ENCODE measurements at regions of chr1 and their contacts with region 1.

Region 1: DNA sequence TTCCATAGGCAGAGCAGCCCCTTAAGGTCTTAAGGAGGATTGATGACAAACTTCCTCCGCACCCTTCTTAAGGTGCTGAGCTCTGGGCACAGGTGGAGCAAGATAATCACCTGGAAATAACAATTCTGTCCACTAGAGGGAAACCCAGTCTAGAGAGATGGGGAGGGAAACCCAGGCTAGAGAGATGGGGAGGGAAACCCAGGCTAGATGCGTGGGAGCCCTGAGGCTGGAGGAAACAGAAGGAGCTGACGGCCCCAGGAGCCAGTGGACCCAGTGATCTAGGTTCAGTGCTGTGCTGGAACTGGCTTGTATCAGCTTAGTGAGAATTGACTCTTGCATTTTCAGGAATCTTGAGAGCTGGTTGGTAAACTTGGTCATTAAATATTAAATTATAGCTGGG is 17.8 kb upstream of the MYCL start:
- DNase-seq: peak; percentile 54 to 61
- H3K4me3 ChIP-seq: no peak overlapping the region
- H3K27ac ChIP-seq: no peak overlapping the region
- H3K4me1 ChIP-seq: no peaks in the 10 kb centered on the region
- H3K27me3 ChIP-seq: no peaks in the 10 kb centered on the region
- CTCF ChIP-seq: peak; percentile 90

Region 2: GRCh38 chr1:39933956-39934941 is 14.7 kb after region 1 on chr1:
- CTCF ChIA-PET with region 1: interaction called, 10 read pairs
- POLR2A ChIA-PET with region 1: no interaction called
- intact Hi-C with region 1: no loop called
- DNase-seq: peak; percentile 17 to 78
- H3K4me3 ChIP-seq: no peak overlapping the region
- H3K27ac ChIP-seq: peak overlapping the region; percentile 44
- H3K4me1 ChIP-seq: peaks cover 21% of the 10 kb centered on the region
- H3K27me3 ChIP-seq: no peaks in the 10 kb centered on the region
- CTCF ChIP-seq: no peak

Region 3: GRCh38 chr1:39996396-39997004 is 77.0 kb after region 1 on chr1:
- CTCF ChIA-PET with region 1: no interaction called
- POLR2A ChIA-PET with region 1: no interaction called
- intact Hi-C with region 1: no loop called
- DNase-seq: no peak
- H3K4me3 ChIP-seq: no peak overlapping the region
- H3K27ac ChIP-seq: no peak overlapping the region
- H3K4me1 ChIP-seq: no peaks in the 10 kb centered on the region
- H3K27me3 ChIP-seq: no peaks in the 10 kb centered on the region
- CTCF ChIP-seq: no peak

Region 4: DNA sequence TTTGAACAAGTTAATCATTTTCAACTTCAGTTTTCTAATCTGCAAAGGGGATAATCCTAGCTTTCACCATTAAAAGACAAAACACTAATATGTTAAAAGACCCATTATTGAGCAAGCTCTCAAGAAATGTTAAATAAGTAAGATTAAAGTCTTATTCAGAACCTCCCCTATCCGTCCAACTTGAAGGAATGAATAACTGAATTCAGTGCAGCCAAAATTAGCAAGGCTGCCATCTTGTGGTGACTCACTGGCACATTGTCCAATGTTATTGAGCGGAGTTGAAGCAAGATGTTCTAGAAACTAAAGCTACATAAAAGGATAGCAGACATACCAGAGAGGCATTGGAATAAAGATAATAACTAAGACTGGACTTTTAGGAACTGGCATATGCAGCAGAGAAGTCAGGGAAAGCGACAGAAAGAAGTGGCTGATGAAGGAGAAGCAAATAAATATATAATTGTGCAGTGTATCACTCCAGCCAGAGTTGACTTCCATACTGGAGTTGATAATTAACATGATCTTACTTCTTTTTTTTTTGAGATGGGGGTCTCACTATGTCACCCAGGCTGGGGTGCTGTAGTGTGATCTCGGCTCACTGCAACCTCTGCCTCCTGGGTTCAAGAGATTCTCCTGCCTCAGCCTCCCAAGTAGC is 112.8 kb after region 1 on chr1:
- CTCF ChIA-PET with region 1: interaction called, 33 read pairs
- POLR2A ChIA-PET with region 1: interaction called, 3 read pairs
- intact Hi-C with region 1: loop called (anchors 1 kb)
- DNase-seq: peak in 1 of 2 experiments; percentile 55
- H3K4me3 ChIP-seq: no peak overlapping the region
- H3K27ac ChIP-seq: no peak overlapping the region
- H3K4me1 ChIP-seq: peaks cover 17% of the 10 kb centered on the region
- H3K27me3 ChIP-seq: no peaks in the 10 kb centered on the region
- CTCF ChIP-seq: peak; percentile 73

Region 5: DNA sequence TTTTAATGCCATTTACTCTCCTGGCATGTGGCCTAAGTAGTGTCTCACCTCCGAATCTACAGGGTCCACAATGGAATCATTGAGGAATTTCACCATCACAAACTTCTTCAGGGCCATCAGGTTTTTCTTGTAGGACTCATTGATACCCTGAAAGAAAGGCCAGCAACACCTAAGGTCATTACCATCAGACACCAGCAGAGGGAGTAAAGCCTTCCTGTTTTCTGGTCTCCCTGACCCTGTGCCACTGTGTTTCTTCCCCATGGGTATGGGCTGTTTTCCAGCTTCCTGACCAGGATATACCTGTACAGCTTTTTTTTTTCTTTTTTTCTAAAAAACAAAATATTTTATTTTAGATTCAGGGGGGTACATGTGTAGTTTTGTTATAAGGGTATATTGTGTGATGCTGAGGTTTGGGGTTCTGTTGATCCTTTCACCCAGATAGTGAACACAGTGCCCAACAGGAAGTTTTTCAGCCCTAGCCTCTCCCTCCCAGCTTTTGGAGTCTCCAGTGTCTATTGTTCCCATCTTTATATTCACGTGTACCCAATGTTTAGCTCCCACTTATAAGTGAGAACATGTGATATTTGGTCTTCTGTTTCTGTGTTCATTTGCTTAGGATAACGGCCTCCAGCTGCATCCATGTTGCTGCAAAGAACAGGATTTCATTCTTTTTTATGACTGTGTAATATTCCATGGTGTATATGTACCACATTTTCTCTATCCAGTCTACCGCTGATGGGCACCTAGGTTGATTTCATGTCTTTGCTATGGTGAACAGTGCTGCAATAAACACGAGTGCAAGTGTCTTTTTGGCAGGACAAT is 159.2 kb after region 1 on chr1:
- CTCF ChIA-PET with region 1: interaction called, 7 read pairs
- POLR2A ChIA-PET with region 1: no interaction called
- intact Hi-C with region 1: loop called (anchors 5 kb)
- DNase-seq: peak; percentile 65 to 73
- H3K4me3 ChIP-seq: no peak overlapping the region
- H3K27ac ChIP-seq: no peak overlapping the region
- H3K4me1 ChIP-seq: no peaks in the 10 kb centered on the region
- H3K27me3 ChIP-seq: no peaks in the 10 kb centered on the region
- CTCF ChIP-seq: peak; percentile 93

Region 6: GRCh38 chr1:40132383-40133311 is 213.1 kb after region 1 on chr1:
- CTCF ChIA-PET with region 1: no interaction called
- POLR2A ChIA-PET with region 1: no interaction called
- intact Hi-C with region 1: no loop called
- DNase-seq: no peak
- H3K4me3 ChIP-seq: no peak overlapping the region
- H3K27ac ChIP-seq: no peak overlapping the region
- H3K4me1 ChIP-seq: peaks cover 20% of the 10 kb centered on the region
- H3K27me3 ChIP-seq: no peaks in the 10 kb centered on the region
- CTCF ChIP-seq: no peak

Region 7: DNA sequence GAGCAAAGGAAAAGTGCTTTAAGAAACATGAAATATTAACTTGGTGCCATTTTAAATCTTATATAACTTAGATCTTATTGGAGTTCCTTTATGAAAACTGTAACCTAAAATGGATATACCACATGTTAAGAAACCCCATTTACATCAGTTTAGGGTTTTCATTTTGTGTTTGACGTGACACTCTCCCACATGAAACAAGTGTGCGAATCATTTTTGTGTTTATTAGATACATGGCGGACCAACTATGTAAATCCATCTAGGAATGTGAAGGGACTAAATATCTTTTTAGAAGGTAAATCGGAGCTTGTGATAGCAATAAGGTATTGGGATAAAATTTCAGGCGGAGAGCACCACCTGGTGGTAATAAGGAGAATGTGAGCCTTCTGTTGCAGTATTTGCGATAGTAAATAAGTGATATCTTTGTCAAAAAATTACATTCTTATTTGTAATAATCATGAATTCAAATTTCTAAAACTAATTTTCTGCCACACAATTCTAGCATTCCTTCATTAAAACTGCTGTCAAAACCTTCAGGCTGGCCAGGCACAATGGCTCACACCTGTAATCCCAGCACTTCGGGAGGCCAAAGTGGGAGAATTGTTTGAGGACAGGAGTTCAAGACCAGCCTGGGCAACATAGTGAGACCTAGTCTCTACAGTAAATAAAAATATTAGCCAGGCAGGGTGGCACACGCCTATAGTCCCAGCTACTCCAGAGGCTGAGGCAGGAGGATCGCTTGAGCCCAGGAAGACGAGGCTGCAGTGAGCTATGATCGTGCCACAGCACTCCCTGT is 485.3 kb after region 1 on chr1:
- CTCF ChIA-PET with region 1: no interaction called
- POLR2A ChIA-PET with region 1: no interaction called
- intact Hi-C with region 1: loop called (anchors 2 kb)
- DNase-seq: peak; percentile 32 to 54
- H3K4me3 ChIP-seq: no peak overlapping the region
- H3K27ac ChIP-seq: no peak overlapping the region
- H3K4me1 ChIP-seq: no peaks in the 10 kb centered on the region; the same call in 1 of the 2 replicates
- H3K27me3 ChIP-seq: no peaks in the 10 kb centered on the region
- CTCF ChIP-seq: peak; percentile 91